Activated CD8-positive, alpha-beta T cell treated with anti-CD3 and anti-CD28 coated beads for 36 hours (primary cell): ENCODE measurements at regions of chr7 and their contacts with region 1.

Region 1: DNA sequence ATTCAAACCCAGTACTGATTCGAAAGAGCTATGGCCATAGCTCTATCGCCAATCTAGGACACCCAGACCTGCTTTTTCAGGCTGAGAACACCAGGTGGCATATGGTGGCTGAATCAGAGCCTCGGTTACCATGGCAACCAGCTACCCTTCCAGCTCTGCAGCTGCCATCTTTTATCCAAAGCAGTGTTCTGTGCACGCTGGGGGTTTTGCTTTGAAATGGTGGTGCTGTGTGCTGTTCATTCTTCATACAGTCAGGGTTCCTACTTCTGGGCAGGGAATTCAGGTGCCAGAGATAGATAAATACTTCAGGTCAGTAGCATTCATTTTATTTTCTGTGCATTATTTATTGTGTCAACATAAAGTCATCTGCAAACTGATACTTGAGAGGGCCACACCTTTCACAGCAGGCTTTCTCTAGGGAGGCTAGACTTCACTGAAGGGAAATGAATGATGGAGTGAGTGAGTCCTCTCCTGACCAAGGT is 85.4 kb downstream of the AKR1D1 start:
- DNase-seq: peak; percentile 88
- ATAC-seq: peak; percentile 99
- H3K4me3 Mint-ChIP-seq: no peak overlapping the region
- H3K27ac Mint-ChIP-seq: no peak overlapping the region
- H3K4me1 Mint-ChIP-seq: no peaks in the 10 kb centered on the region
- H3K27me3 Mint-ChIP-seq: no peaks in the 10 kb centered on the region
- CTCF ChIP-seq: peak; percentile 65

Region 2: DNA sequence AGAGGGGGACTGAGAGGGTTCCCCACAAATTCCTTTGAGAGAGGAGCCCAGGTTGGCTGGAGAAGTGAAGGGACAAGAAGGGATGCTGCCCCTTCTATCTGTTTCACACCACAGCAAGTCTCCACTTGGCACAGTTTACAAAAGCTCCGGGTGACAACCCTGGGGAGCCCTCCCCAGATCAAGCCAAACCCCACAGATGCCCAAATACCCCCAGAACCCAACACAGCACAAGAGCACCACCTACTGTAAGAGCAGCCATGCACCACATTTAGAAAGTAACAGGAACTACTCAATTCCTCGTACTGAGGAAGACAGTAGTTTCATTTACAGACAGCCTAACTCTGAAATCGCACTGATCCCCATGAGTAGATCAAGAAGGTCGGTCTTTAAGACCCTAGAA is 704.2 kb after region 1 on chr7:
- CTCF ChIA-PET with region 1: interaction called, 3 read pairs
- POLR2A ChIA-PET with region 1: no interaction called
- intact Hi-C with region 1: loop called (anchors 10 kb)
- DNase-seq: peak; percentile 55
- ATAC-seq: peak; percentile 89
- H3K4me3 Mint-ChIP-seq: no peak overlapping the region
- H3K27ac Mint-ChIP-seq: peak overlapping the region; percentile 39
- H3K4me1 Mint-ChIP-seq: peaks cover 8% of the 10 kb centered on the region
- H3K27me3 Mint-ChIP-seq: no peaks in the 10 kb centered on the region
- CTCF ChIP-seq: peak; percentile 58